ENCODE measurements at regions of chr4 and their contacts with region 1.

Region 1: GRCh38 chr4:97507587-97508245 is 635.6 kb downstream of the STPG2 start:
- DNase-seq: peak; percentile 63
- H3K4me3 ChIP-seq: no peak overlapping the region
- H3K27ac ChIP-seq: peak overlapping the region; percentile 63
- H3K4me1 ChIP-seq: peaks cover 12% of the 10 kb centered on the region
- H3K27me3 ChIP-seq: no peaks in the 10 kb centered on the region
- CTCF ChIP-seq: no peak
- POLR2A ChIP-seq: no peak

Region 2: DNA sequence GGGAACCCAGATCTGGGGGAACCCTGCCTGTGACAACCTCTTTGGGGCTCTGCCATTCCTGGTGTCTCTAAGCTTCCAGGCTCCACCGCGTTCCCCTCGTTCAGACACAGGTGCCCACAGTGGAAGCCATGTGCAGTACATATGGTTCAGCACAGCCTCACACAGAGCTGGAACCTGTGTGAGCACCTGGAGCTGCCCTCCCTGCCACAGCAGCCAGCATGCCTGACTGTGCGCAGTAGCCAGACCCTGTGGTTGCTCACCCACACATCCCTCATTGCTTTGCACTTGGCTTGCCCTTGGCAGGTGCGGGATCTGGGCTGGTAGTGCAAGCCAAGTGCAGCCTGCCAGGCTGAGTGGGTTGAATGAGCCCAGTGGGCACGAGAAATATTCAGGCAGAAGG is 853.7 kb before region 1 on chr4:
- CTCF ChIA-PET with region 1: no interaction called
- POLR2A ChIA-PET with region 1: no interaction called
- dilution Hi-C with region 1: no loop called
- intact Hi-C with region 1: no loop called
- DNase-seq: no peak
- H3K4me3 ChIP-seq: no peak overlapping the region
- H3K27ac ChIP-seq: no peak overlapping the region
- H3K4me1 ChIP-seq: peaks cover 9% of the 10 kb centered on the region
- H3K27me3 ChIP-seq: no peaks in the 10 kb centered on the region
- CTCF ChIP-seq: no peak
- POLR2A ChIP-seq: no peak

Region 3: GRCh38 chr4:97525236-97525635 is 17.5 kb after region 1 on chr4:
- CTCF ChIA-PET with region 1: interaction called, 3 read pairs
- POLR2A ChIA-PET with region 1: no interaction called
- dilution Hi-C with region 1: no loop called
- intact Hi-C with region 1: loop called (anchors 1 kb)
- DNase-seq: peak; percentile 89
- H3K4me3 ChIP-seq: peak overlapping the region in 1 of 3 experiments; percentile 11
- H3K27ac ChIP-seq: peak overlapping the region; percentile 52
- H3K4me1 ChIP-seq: peaks cover 5% of the 10 kb centered on the region
- H3K27me3 ChIP-seq: no peaks in the 10 kb centered on the region
- CTCF ChIP-seq: no peak
- POLR2A ChIP-seq: no peak

Region 4: GRCh38 chr4:97646997-97647396 is 139.3 kb after region 1 on chr4:
- CTCF ChIA-PET with region 1: no interaction called
- POLR2A ChIA-PET with region 1: no interaction called
- dilution Hi-C with region 1: no loop called
- intact Hi-C with region 1: no loop called
- DNase-seq: peak; percentile 77
- H3K4me3 ChIP-seq: no peak overlapping the region
- H3K27ac ChIP-seq: no peak overlapping the region
- H3K4me1 ChIP-seq: peaks cover 9% of the 10 kb centered on the region
- H3K27me3 ChIP-seq: no peaks in the 10 kb centered on the region
- CTCF ChIP-seq: no peak
- POLR2A ChIP-seq: no peak